ENCODE measurements at regions of chr12 and their contacts with region 1.

Region 1: GRCh38 chr12:25436203-25437030 is 116.7 kb downstream of the LMNTD1 start:
- DNase-seq: peak; percentile 81
- H3K4me3 Mint-ChIP-seq: peak overlapping the region; percentile 32
- H3K27ac Mint-ChIP-seq: peak overlapping the region; percentile 65
- H3K4me1 Mint-ChIP-seq: peaks cover 15% of the 10 kb centered on the region
- H3K27me3 Mint-ChIP-seq: no peaks in the 10 kb centered on the region
- CTCF ChIP-seq: peak; percentile 78

Region 2: DNA sequence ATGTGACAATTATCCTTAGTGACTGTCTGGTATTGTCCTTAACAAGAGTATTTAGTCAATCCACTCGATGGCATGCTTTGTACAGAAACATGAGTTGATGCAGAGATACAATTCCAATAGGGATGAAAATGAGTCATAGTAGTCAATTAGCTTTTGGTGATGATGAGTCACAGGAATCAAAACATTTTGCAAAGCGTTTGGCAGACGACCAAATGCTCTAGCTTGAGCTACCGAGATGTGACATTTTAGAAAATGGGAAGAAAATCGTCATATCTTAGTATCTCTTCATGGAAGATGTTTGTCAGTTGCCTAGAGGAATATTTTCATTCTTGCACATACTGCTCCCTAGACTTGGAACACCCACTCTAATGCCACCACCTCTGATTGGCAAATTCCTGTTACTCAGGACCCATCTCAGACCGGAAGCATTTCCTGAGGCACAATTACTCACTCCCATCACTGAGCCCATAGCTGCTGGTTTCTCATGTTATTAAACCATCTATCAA is 21.7 kb after region 1 on chr12:
- CTCF ChIA-PET with region 1: interaction called, 10 read pairs
- POLR2A ChIA-PET with region 1: interaction called, 4 read pairs
- intact Hi-C with region 1: no loop called
- DNase-seq: peak; percentile 96
- H3K4me3 Mint-ChIP-seq: peak overlapping the region; percentile 67
- H3K27ac Mint-ChIP-seq: peak overlapping the region; percentile 51
- H3K4me1 Mint-ChIP-seq: peaks cover 12% of the 10 kb centered on the region
- H3K27me3 Mint-ChIP-seq: no peaks in the 10 kb centered on the region
- CTCF ChIP-seq: no peak

Region 3: DNA sequence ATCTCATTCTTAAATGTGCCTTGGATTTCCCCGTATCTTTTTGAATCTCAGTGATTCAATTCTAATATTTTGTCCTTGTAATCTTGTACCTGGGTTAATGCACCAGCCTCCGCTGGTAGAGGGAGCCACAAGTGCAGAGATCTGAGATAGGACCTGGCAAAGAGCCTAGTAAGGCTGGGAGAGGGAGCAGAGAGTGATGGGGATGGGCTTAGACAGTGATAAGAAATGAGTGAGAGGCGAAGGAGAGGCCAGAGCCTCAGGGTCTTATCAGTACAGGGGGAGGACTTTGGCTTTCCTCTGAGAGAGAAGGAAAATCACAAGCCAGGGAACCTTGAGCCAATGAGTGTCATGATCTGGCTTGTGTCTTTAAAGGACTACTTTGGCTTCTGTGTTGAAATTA is 147.1 kb after region 1 on chr12:
- CTCF ChIA-PET with region 1: no interaction called
- POLR2A ChIA-PET with region 1: no interaction called
- intact Hi-C with region 1: loop called (anchors 1 kb)
- DNase-seq: peak; percentile 58
- H3K4me3 Mint-ChIP-seq: no peak overlapping the region
- H3K27ac Mint-ChIP-seq: peak overlapping the region; percentile 2
- H3K4me1 Mint-ChIP-seq: peaks cover 27% of the 10 kb centered on the region
- H3K27me3 Mint-ChIP-seq: no peaks in the 10 kb centered on the region
- CTCF ChIP-seq: peak; percentile 22

Region 4: DNA sequence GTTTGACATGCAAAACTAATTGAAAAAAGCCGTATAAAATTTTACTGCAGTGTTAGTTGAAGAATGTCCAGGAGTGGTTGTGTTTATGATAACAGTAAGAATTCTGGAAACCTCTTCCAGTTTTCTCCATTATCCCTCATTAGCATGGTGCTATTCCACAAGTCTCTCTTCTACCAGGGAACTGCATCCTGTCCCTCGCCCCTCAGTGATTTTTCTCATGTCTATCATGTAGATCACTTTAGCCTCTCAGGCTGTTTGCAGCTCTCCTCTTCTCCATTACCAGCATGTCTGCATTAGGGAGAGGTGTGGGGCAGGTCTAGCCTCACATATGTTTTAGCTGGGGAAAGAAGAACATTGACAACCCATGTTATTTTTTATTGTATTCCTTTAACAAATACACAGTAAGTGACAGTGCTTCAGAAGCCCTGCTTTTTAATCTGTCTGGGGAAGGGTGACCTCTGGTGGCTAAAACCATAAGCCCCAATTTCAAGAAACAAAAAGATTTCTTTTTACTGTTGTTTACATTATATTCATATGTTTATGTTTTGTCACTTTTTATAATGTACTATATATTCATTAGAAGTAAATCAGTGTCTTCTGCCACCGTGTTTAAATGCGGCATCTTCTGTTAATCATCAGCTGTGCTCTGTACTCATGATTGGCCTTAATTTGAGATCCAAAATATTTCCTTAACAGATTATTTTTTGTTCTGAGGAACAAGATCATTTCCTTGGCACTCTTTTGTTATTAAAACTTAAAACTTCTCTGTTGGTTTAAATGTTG is 592.7 kb after region 1 on chr12:
- CTCF ChIA-PET with region 1: interaction called, 24 read pairs
- POLR2A ChIA-PET with region 1: no interaction called
- intact Hi-C with region 1: loop called (anchors 1 kb)
- DNase-seq: peak; percentile 56
- H3K4me3 Mint-ChIP-seq: no peak overlapping the region
- H3K27ac Mint-ChIP-seq: no peak overlapping the region
- H3K4me1 Mint-ChIP-seq: peaks cover 21% of the 10 kb centered on the region
- H3K27me3 Mint-ChIP-seq: no peaks in the 10 kb centered on the region
- CTCF ChIP-seq: peak; percentile 80

Region 5: DNA sequence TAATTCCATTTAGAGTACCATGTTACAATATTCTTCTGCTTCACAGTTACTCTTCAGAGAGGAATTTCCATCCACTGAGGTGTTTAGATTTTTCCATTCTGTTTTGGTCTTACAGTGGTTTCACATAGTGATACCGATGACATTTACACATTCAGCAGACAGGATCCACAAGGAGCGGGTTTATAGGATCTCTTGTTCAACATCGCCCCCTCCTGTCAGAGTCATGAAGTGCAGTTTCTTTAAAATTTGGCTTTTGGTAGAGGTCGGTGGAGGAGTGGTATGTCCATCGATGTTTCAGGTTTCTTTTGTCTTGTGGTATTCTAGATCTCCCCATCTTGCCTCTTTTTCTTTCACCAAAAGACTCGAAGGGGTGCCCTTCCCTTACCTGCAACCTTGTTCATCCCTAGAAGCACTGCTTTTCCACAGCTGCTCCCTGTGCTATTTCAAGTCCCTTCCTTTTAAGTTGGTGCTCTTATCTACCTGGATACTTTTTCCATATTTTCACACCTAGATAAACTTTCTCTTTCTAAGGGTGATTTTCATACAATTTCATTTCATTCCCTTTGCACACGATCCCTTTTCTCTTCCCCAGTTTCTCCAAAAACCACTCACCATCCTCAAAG is 1215.3 kb after region 1 on chr12:
- CTCF ChIA-PET with region 1: no interaction called
- POLR2A ChIA-PET with region 1: no interaction called
- intact Hi-C with region 1: loop called (anchors 10 kb)
- DNase-seq: peak; percentile 75
- H3K4me3 Mint-ChIP-seq: no peak overlapping the region
- H3K27ac Mint-ChIP-seq: no peak overlapping the region
- H3K4me1 Mint-ChIP-seq: peaks cover 16% of the 10 kb centered on the region
- H3K27me3 Mint-ChIP-seq: no peaks in the 10 kb centered on the region
- CTCF ChIP-seq: peak; percentile 89

Measured in MCF 10A (cell line).